Heart right ventricle (tissue), 16 donors: ENCODE measurements at regions of chr3 and their contacts with region 1.

Region 1: GRCh38 chr3:168964736-168965135 is 698.8 kb downstream of the MECOM start:
- DNase-seq: no peak
- ATAC-seq: no peak
- H3K4me3 ChIP-seq: no peak overlapping the region
- H3K27ac ChIP-seq: no peak overlapping the region
- H3K4me1 ChIP-seq: no peaks in the 10 kb centered on the region
- H3K27me3 ChIP-seq: no peaks in the 10 kb centered on the region
- CTCF ChIP-seq: no peak

Region 2: GRCh38 chr3:168884353-168884903 is 80.3 kb before region 1 on chr3:
- intact Hi-C with region 1: no loop called
- DNase-seq: peak in 1 of 2 donors; percentile 62
- ATAC-seq: peak in 7 of 8 donors; percentile 63 to 93 (median 82)
- H3K4me3 ChIP-seq: no peak overlapping the region
- H3K27ac ChIP-seq: no peak overlapping the region
- H3K4me1 ChIP-seq: peaks cover 0 to 28% (median 11%) of the 10 kb centered on the region in 9 donors
- H3K27me3 ChIP-seq: no peaks in the 10 kb centered on the region
- CTCF ChIP-seq: no peak

Region 3: GRCh38 chr3:169008776-169009358 is 44.1 kb after region 1 on chr3:
- intact Hi-C with region 1: loop called in 1 of 10 experiments (anchors 1 kb)
- DNase-seq: no peak
- ATAC-seq: no peak
- H3K4me3 ChIP-seq: no peak overlapping the region
- H3K27ac ChIP-seq: no peak overlapping the region
- H3K4me1 ChIP-seq: no peaks in the 10 kb centered on the region
- H3K27me3 ChIP-seq: no peaks in the 10 kb centered on the region
- CTCF ChIP-seq: no peak